Testis (tissue), 5 donors: ENCODE measurements at regions of chr17 and their contacts with region 1.

Region 1: DNA sequence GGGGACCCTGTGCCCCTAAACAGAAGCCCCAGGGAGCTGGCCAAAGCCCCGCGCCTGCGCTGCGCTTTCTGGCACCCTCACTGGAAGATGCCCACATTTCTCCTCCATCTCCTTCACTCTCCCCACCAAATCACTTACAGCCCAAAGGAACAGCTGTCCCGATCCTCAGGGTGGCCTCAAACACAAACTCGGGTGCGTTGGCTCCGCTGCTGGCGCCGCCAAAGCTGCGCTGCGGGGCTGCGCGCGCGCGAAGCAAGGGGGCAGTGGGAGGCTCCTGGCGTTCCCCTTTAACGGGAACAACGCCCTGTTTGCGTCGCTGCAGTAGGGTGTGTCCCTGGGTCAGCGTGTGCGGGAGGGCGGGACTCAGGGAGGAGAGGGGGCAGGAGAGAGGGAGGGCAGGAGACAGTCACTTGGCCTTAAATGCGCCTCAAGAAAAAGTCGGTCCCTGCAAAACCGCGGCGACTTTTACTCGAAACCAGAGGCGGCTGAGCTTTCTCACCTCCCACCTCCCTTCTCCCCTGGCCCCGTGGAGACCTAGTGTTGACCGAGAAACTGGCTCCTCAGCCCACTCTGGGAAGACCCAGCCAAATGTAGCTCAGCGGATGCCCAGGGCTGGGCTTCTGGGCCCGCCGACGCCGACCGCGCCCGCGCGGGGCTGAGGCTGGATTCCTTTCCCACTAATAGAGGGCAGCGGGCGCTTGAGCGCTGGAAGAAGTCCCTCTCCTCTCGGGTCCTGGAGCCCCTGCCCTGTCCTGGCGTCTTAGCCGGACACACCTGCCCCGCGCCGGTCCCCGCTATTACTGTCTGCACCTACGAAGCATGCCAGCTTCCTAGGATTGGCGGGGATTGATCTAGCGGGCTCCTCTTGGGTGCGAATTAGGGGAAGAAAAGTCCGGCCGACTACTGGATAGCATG is 2.6 kb downstream of the PMP22 start:
- DNase-seq: peak; percentile 92
- H3K4me3 ChIP-seq: peak overlapping the region; percentile 70 to 80
- H3K27ac ChIP-seq: peak overlapping the region; percentile 88 to 93
- H3K4me1 ChIP-seq: peaks cover 24% of the 10 kb centered on the region
- H3K27me3 ChIP-seq: no peaks in the 10 kb centered on the region
- CTCF ChIP-seq: peak in 1 of 3 experiments; percentile 9
- POLR2A ChIP-seq: peak; percentile 20

Region 2: DNA sequence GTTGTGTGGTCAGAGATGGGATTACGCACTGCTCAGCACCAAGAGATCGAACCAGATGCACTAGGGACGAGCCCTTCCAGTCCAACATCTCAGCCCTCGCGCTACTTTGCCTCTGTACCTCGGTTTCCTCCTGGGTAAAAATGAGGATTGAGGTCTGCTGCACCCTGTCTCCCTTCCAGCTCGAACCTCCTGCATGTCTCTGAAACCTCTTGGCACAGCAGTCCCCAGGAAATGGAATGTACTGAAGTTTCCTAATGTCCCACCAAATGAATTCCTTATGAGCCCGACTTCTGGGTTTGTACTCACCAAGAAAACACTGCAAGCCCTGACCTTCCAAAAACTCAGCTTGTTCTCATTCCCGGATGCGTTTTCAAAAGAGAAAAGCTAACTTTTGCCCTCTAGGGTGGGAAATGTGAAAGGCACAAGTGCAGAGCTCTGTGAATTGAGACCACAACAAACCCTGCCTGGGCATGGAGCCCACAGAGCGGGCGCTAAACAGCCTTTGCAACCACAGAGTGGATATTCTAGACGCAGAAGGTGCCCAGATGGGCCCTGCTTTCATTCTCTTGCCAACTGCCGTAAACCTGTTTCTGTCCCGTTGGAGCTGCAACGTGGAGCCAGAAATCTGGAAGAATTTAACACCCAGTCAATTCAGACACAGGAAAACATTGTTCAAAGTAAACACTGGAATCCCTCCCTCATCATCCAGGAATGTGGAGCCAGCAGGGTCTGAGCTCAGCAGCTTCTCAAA is 194.6 kb after region 1 on chr17:
- intact Hi-C with region 1: loop called (anchors 2 kb)
- DNase-seq: peak; percentile 45
- H3K4me3 ChIP-seq: no peak overlapping the region
- H3K27ac ChIP-seq: peak overlapping the region; percentile 36 to 71
- H3K4me1 ChIP-seq: peaks cover 12% of the 10 kb centered on the region
- H3K27me3 ChIP-seq: no peaks in the 10 kb centered on the region
- CTCF ChIP-seq: peak in 1 of 3 experiments; percentile 20
- POLR2A ChIP-seq: no peak